Calu3 (cell line): ENCODE measurements at regions of chr12 and their contacts with region 1.

Region 1: DNA sequence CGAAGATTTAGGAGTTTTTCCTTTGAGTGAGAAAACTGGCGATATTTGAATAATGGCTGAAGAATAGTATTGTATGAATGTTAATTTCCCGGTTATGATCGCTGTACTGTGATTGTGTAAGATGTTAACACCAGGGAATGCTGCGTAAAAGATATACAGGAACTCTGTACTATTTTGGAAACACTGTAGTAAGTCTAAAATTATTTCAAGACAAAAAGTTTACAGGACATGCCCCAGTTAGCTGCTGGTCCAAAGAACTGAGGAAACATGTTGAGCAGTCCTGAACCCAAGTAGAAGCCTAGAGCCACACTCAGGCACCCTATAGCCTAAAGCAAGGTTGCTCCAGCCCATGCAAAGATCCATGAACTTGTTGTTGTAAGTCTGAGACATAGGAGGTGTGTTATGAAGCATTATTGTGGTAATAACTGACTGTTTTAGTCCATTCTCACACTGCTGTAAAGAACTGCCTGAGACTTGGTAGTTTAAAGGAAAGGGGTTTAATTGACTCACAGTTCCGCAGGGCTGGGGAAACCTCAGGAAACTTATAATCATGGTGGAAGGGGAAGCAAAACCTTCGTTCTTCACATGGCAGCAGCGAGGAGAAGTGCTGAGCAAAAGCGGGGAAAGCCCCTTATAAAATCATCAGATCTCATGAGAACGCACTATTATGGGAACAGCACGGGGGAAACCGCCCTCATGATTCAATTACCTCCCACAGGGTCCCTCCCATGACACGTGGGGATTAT is 99.8 kb upstream of the RESF1 start:
- DNase-seq: no peak
- H3K4me3 Mint-ChIP-seq: no peak overlapping the region
- H3K27ac Mint-ChIP-seq: no peak overlapping the region
- H3K4me1 Mint-ChIP-seq: peaks cover under 1% of the 10 kb centered on the region
- H3K27me3 Mint-ChIP-seq: no peaks in the 10 kb centered on the region
- CTCF ChIP-seq: no peak

Region 2: DNA sequence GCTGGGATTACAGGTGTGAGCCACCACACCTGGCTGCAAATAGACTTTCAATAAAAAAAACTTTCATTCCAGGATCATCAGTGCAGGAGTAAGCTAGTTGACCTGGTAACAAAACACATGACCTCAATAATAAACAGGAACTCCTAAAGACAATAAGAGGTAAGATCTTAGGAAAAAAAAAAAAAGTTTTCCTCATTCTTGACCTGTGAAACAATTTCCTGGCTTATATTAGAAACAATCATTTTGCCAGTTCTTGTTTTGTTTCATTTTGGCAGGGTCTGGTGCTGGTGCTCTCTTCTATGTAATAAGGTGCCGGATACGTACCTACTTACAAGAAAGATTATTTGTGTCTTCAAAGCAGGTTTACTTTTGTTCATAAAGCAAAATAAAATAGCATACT is 40.0 kb before region 1 on chr12:
- CTCF ChIA-PET with region 1: no interaction called
- intact Hi-C with region 1: no loop called
- DNase-seq: no peak
- H3K4me3 Mint-ChIP-seq: no peak overlapping the region
- H3K27ac Mint-ChIP-seq: no peak overlapping the region
- H3K4me1 Mint-ChIP-seq: no peaks in the 10 kb centered on the region
- H3K27me3 Mint-ChIP-seq: no peaks in the 10 kb centered on the region
- CTCF ChIP-seq: no peak

Region 3: GRCh38 chr12:31944299-31944698 is 84.9 kb after region 1 on chr12:
- CTCF ChIA-PET with region 1: no interaction called
- intact Hi-C with region 1: loop called (anchors 5 kb)
- DNase-seq: no peak
- H3K4me3 Mint-ChIP-seq: no peak overlapping the region
- H3K27ac Mint-ChIP-seq: no peak overlapping the region
- H3K4me1 Mint-ChIP-seq: no peaks in the 10 kb centered on the region
- H3K27me3 Mint-ChIP-seq: no peaks in the 10 kb centered on the region
- CTCF ChIP-seq: no peak